Endothelial cell of umbilical vein (primary cell): ENCODE measurements at regions of chrX and their contacts with region 1.

Region 1: GRCh38 chrX:72540318-72540717 is 32.3 kb downstream of the HDAC8 start:
- DNase-seq: peak; percentile 30
- H3K4me3 ChIP-seq: no peak overlapping the region
- H3K27ac ChIP-seq: no peak overlapping the region
- H3K4me1 ChIP-seq: no peaks in the 10 kb centered on the region
- H3K27me3 ChIP-seq: no peaks in the 10 kb centered on the region
- CTCF ChIP-seq: no peak
- POLR2A ChIP-seq: no peak

Region 2: DNA sequence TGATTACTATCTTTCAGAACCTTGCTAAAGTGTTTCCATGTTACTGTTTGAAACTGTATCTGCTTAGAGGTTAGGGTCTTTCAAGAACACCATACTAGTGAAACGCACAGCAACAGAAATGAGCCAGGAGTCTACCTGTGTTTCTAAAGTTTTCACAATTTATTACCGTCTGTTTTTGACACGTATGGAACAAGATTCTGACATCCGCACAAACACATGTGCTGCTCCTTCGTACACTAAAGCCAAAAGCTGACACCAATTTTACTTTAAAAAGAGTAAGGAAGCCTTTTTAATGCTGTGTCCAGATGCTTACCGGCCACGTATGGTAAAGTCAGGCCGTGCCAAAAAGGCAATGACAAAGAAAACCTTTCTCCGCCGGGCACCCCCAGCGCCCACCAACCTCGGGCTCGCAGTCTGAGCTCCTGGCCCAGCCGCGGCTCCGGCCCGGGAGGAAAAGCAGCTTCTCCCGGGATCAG is 263.8 kb before region 1 on chrX:
- CTCF ChIA-PET with region 1: interaction called, 10 read pairs
- POLR2A ChIA-PET with region 1: interaction called, 4 read pairs
- dilution Hi-C with region 1: no loop called
- intact Hi-C with region 1: no loop called
- DNase-seq: peak; percentile 22
- H3K4me3 ChIP-seq: peak overlapping the region; percentile 56 to 97 (median 82)
- H3K27ac ChIP-seq: peak overlapping the region; percentile 60
- H3K4me1 ChIP-seq: peaks cover 39% of the 10 kb centered on the region
- H3K27me3 ChIP-seq: peaks cover 0 to 2% of the 10 kb centered on the region in 2 experiments
- CTCF ChIP-seq: no peak
- POLR2A ChIP-seq: no peak

Region 3: DNA sequence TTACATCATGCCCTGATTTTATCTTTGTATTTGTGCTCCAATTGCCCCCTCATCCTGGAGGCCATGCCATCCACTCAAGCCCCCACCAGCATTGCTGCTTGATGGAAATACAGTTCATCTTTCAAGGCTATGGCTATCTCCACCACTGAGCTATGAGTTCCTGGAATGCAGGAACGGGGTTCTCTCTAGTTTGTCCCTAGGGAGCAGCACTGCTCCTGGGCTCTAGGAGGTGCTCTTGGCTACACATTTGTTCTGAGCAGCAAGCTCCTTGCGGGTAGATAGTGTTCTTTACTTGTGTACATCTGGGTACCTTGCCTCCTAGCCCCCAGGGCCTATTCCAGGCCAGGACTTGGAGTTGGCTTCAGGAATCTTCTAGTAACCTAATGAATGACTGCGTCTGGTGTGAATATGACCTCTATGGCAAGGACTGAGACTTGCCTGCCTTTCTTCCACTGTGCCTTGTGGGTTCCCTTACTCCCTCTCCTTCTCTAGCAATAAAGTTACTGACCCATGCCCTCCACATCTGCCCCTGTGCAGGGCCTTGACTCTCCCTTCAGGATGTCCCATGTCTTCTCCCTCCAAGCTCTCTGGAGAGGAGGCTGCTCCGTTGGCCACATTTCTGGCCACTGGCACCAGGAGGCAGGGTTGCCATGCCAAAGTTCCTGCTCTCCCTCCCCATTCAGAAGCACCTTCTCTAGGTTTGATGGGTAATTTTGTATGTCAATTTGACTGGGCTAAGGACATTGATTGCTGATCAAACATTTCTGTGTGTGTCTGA is 242.2 kb before region 1 on chrX:
- CTCF ChIA-PET with region 1: interaction called, 30 read pairs
- POLR2A ChIA-PET with region 1: no interaction called
- dilution Hi-C with region 1: no loop called
- intact Hi-C with region 1: loop called (anchors 1 kb)
- DNase-seq: no peak
- H3K4me3 ChIP-seq: no peak overlapping the region
- H3K27ac ChIP-seq: no peak overlapping the region
- H3K4me1 ChIP-seq: no peaks in the 10 kb centered on the region
- H3K27me3 ChIP-seq: peaks cover 25 to 30% of the 10 kb centered on the region in 2 experiments
- CTCF ChIP-seq: peak; percentile 16 to 40
- POLR2A ChIP-seq: no peak

Region 4: GRCh38 chrX:72394518-72395170 is 145.7 kb before region 1 on chrX:
- CTCF ChIA-PET with region 1: no interaction called
- POLR2A ChIA-PET with region 1: no interaction called
- dilution Hi-C with region 1: no loop called
- intact Hi-C with region 1: no loop called
- DNase-seq: no peak
- H3K4me3 ChIP-seq: no peak overlapping the region
- H3K27ac ChIP-seq: no peak overlapping the region
- H3K4me1 ChIP-seq: no peaks in the 10 kb centered on the region
- H3K27me3 ChIP-seq: no peaks in the 10 kb centered on the region
- CTCF ChIP-seq: no peak
- POLR2A ChIP-seq: no peak

Region 5: GRCh38 chrX:72526528-72527508 is 13.5 kb before region 1 on chrX:
- CTCF ChIA-PET with region 1: interaction called, 13 read pairs
- POLR2A ChIA-PET with region 1: no interaction called
- dilution Hi-C with region 1: no loop called
- intact Hi-C with region 1: no loop called
- DNase-seq: peak; percentile 62
- H3K4me3 ChIP-seq: no peak overlapping the region
- H3K27ac ChIP-seq: no peak overlapping the region
- H3K4me1 ChIP-seq: peaks cover 12% of the 10 kb centered on the region
- H3K27me3 ChIP-seq: no peaks in the 10 kb centered on the region
- CTCF ChIP-seq: no peak
- POLR2A ChIP-seq: no peak